CD4-positive, alpha-beta memory T cell (primary cell): ENCODE measurements at regions of chr15 and their contacts with region 1.

Region 1: GRCh38 chr15:40440743-40441564 is at the start of gene BAHD1:
- DNase-seq: peak; percentile 89 to 93 (median 90)
- H3K4me3 ChIP-seq: peak within 1 kb of the TSS; percentile 62 to 65
- H3K4me3 Mint-ChIP-seq: peak within 1 kb of the TSS; percentile 91 to 96 (median 93)
- H3K27ac ChIP-seq: peak within 1 kb of the TSS; percentile 49
- H3K27ac Mint-ChIP-seq: peak within 1 kb of the TSS; percentile 87 to 94 (median 92)
- H3K4me1 ChIP-seq: peaks cover 67% of the 10 kb centered on the region
- H3K4me1 Mint-ChIP-seq: peaks cover 49 to 83% (median 60%) of the 10 kb centered on the region in 4 donors
- H3K27me3 ChIP-seq: peaks cover 12% of the 10 kb centered on the region
- H3K27me3 Mint-ChIP-seq: peaks cover 13% of the 10 kb centered on the region in 2 donors
- total RNA-seq, gene BAHD1: 47.0 to 49.2 TPM

Region 2: DNA sequence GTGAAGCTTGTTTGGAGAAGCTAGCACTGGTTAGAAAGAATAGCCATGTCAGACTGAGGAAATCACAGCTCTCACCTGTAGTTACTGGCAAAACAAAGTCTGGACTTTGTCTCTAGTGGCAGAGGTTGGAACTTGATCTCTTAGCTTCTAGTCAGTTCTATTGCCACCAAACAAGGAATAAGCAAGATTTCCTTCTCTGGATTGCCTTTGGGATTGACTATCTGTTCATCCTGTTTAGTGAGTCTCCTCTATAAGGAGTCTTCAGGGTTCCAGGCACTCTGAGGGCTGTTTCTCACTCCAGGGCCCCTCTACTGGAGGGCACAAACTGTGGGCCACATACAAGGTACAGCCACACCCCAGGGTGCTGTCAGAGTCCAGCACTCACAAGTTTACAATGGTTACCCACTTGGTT is 1286.7 kb before region 1 on chr15:
- CTCF ChIA-PET with region 1: no interaction called
- POLR2A ChIA-PET with region 1: no interaction called
- intact Hi-C with region 1: no loop called
- DNase-seq: no peak
- H3K4me3 ChIP-seq: no peak overlapping the region
- H3K4me3 Mint-ChIP-seq: no peak overlapping the region
- H3K27ac ChIP-seq: no peak overlapping the region
- H3K27ac Mint-ChIP-seq: no peak overlapping the region
- H3K4me1 ChIP-seq: no peaks in the 10 kb centered on the region
- H3K4me1 Mint-ChIP-seq: no peaks in the 10 kb centered on the region
- H3K27me3 ChIP-seq: no peaks in the 10 kb centered on the region
- H3K27me3 Mint-ChIP-seq: peaks cover 4 to 7% of the 10 kb centered on the region in 2 donors

Region 3: GRCh38 chr15:40405501-40406381 is 35.2 kb before region 1 on chr15 and contains the start of gene IVD:
- CTCF ChIA-PET with region 1: no interaction called
- POLR2A ChIA-PET with region 1: interaction called, 8 read pairs
- intact Hi-C with region 1: loop called (anchors 2 kb)
- DNase-seq: peak; percentile 78 to 82 (median 80)
- H3K4me3 ChIP-seq: peak within 1 kb of the TSS; percentile 42 to 63
- H3K4me3 Mint-ChIP-seq: peak within 1 kb of the TSS; percentile 82 to 98 (median 90)
- H3K27ac ChIP-seq: peak within 1 kb of the TSS; percentile 61
- H3K27ac Mint-ChIP-seq: peak within 1 kb of the TSS; percentile 62 to 92 (median 86)
- H3K4me1 ChIP-seq: peaks cover 25% of the 10 kb centered on the region
- H3K4me1 Mint-ChIP-seq: peaks cover 24 to 35% (median 30%) of the 10 kb centered on the region in 4 donors
- H3K27me3 ChIP-seq: no peaks in the 10 kb centered on the region
- H3K27me3 Mint-ChIP-seq: no peaks in the 10 kb centered on the region
- total RNA-seq, gene IVD: 56.4 to 62.2 TPM

Region 4: DNA sequence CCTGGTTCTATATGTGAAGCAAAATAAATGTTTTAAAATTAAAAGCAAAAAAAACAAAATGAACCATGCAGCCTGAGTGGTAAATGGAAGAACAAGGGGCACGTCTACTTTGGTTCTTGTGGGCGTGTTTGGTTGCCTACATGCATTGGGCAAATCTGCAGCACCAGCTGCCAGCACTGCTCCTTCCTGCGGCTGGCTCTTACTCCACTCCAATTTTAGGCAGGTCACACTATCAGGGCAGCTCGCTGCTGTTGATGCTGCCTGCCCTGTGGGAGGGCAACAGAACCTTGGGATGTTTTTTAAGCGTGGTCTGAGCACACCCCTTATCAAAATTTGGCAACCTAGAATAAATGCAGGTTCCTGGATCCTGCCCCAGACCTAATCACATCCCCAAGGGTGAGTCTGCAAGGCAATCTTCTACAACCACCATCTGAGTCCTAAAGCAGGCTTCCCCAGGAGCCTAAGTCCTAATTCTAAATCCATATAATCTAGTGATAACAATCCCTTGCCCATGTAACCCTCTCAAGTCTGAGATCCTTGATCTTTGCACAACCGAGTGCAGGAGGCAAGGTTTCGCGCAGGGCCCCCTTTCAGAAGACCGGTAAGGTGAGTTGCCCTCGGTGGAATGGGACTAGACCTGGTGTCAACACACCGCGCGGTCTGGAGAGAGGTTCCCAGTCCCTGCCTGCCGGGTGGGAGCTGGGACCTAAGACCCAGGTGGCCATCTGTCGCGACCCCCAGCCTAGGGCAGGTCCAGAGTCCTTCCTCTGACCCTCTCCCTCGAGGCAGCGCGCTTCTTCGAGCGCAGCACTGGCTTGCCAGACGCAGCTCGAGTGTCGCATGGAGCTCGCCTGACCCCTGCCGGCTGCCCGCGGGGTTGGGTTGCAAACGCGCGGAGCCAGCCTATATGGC is 19.5 kb before region 1 on chr15:
- CTCF ChIA-PET with region 1: interaction called, 10 read pairs
- POLR2A ChIA-PET with region 1: no interaction called
- intact Hi-C with region 1: no loop called
- DNase-seq: peak; percentile 73 to 77 (median 74)
- H3K4me3 ChIP-seq: no peak overlapping the region
- H3K4me3 Mint-ChIP-seq: no peak overlapping the region
- H3K27ac ChIP-seq: no peak overlapping the region
- H3K27ac Mint-ChIP-seq: peak overlapping the region in 1 of 7 donors; percentile 40
- H3K4me1 ChIP-seq: peaks cover 8% of the 10 kb centered on the region
- H3K4me1 Mint-ChIP-seq: peaks cover 0 to 5% (median 0%) of the 10 kb centered on the region in 4 donors
- H3K27me3 ChIP-seq: no peaks in the 10 kb centered on the region
- H3K27me3 Mint-ChIP-seq: no peaks in the 10 kb centered on the region

Region 5: GRCh38 chr15:40454904-40455391 is 14.0 kb after region 1 on chr15:
- CTCF ChIA-PET with region 1: interaction called, 10 read pairs
- POLR2A ChIA-PET with region 1: interaction called, 94 read pairs
- intact Hi-C with region 1: no loop called
- DNase-seq: no peak
- H3K4me3 ChIP-seq: no peak overlapping the region
- H3K4me3 Mint-ChIP-seq: peak overlapping the region in 7 of 8 donors; percentile 21 to 89 (median 67)
- H3K27ac ChIP-seq: peak overlapping the region; percentile 50
- H3K27ac Mint-ChIP-seq: peak overlapping the region; percentile 43 to 88 (median 80)
- H3K4me1 ChIP-seq: peaks cover 76% of the 10 kb centered on the region
- H3K4me1 Mint-ChIP-seq: peaks cover 55 to 78% (median 64%) of the 10 kb centered on the region in 4 donors
- H3K27me3 ChIP-seq: no peaks in the 10 kb centered on the region
- H3K27me3 Mint-ChIP-seq: no peaks in the 10 kb centered on the region

Region 6: GRCh38 chr15:40470423-40471104 is 29.6 kb after region 1 on chr15 and contains the start of gene CHST14:
- CTCF ChIA-PET with region 1: interaction called, 5 read pairs
- POLR2A ChIA-PET with region 1: interaction called, 6 read pairs
- intact Hi-C with region 1: loop called (anchors 5 kb)
- DNase-seq: peak; percentile 42 to 70 (median 58)
- H3K4me3 ChIP-seq: peak within 1 kb of the TSS; percentile 58 to 74
- H3K4me3 Mint-ChIP-seq: peak within 1 kb of the TSS; percentile 87 to 93 (median 90)
- H3K27ac ChIP-seq: peak within 1 kb of the TSS; percentile 70
- H3K27ac Mint-ChIP-seq: peak within 1 kb of the TSS; percentile 87 to 94 (median 90)
- H3K4me1 ChIP-seq: peaks cover 23% of the 10 kb centered on the region
- H3K4me1 Mint-ChIP-seq: peaks cover 12 to 30% (median 22%) of the 10 kb centered on the region in 4 donors
- H3K27me3 ChIP-seq: no peaks in the 10 kb centered on the region
- H3K27me3 Mint-ChIP-seq: no peaks in the 10 kb centered on the region
- total RNA-seq, gene CHST14: 9.1 to 10.5 TPM

Region 7: DNA sequence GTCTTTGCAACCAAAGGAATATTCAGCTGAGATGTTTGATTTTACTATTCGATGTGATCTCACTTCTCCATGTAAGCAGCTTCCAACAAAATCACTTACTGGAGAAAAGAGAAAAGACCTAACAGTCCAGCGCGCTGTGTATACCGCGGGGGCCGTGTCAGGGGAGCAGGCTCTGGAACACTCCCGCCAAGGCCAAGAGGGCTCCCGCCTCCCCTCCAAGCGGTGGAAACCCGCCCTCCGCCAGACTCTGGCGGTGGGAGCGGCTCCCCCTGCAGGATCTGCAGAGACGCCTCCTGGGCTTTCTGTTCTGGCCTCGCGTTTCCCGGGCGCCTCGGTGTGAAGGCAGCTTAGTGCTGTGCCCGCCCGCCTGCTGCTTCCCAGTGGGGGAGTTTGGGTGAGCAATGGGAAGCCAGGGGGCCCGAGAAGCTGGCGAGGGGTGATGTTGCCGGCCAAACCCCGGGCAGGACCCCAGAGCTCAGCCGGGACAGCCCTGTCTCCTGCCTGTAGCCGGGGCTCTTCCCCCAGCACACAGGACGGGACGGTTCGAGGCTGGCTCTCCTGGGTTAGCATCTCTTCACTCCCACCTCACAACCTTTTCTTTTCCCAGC is 66.1 kb after region 1 on chr15:
- CTCF ChIA-PET with region 1: interaction called, 29 read pairs
- POLR2A ChIA-PET with region 1: interaction called, 5 read pairs
- intact Hi-C with region 1: loop called (anchors 1 kb)
- DNase-seq: peak; percentile 44 to 64 (median 47)
- H3K4me3 ChIP-seq: peak overlapping the region in 1 of 2 donors; percentile 22
- H3K4me3 Mint-ChIP-seq: peak overlapping the region in 6 of 8 donors; percentile 12 to 74 (median 54)
- H3K27ac ChIP-seq: no peak overlapping the region
- H3K27ac Mint-ChIP-seq: no peak overlapping the region
- H3K4me1 ChIP-seq: peaks cover 24% of the 10 kb centered on the region
- H3K4me1 Mint-ChIP-seq: peaks cover 9 to 20% (median 14%) of the 10 kb centered on the region in 4 donors
- H3K27me3 ChIP-seq: peaks cover 31% of the 10 kb centered on the region
- H3K27me3 Mint-ChIP-seq: peaks cover 30 to 48% of the 10 kb centered on the region in 2 donors

Region 8: GRCh38 chr15:40564591-40565332 is 123.8 kb after region 1 on chr15 and contains the start of gene CCDC32:
- CTCF ChIA-PET with region 1: no interaction called
- POLR2A ChIA-PET with region 1: interaction called, 4 read pairs
- intact Hi-C with region 1: loop called (anchors 2 kb)
- DNase-seq: peak; percentile 93 to 98 (median 96)
- H3K4me3 ChIP-seq: peak within 1 kb of the TSS; percentile 97 to 98
- H3K4me3 Mint-ChIP-seq: peak within 1 kb of the TSS; percentile 95 to 98 (median 97)
- H3K27ac ChIP-seq: peak within 1 kb of the TSS; percentile 92
- H3K27ac Mint-ChIP-seq: peak within 1 kb of the TSS; percentile 89 to 99 (median 98)
- H3K4me1 ChIP-seq: peaks cover 34% of the 10 kb centered on the region
- H3K4me1 Mint-ChIP-seq: peaks cover 26 to 65% (median 42%) of the 10 kb centered on the region in 4 donors
- H3K27me3 ChIP-seq: no peaks in the 10 kb centered on the region
- H3K27me3 Mint-ChIP-seq: no peaks in the 10 kb centered on the region
- total RNA-seq, gene CCDC32: 31.7 to 32.4 TPM

Region 9: GRCh38 chr15:40660686-40661085 is 219.7 kb after region 1 on chr15:
- CTCF ChIA-PET with region 1: no interaction called
- POLR2A ChIA-PET with region 1: no interaction called
- intact Hi-C with region 1: no loop called
- DNase-seq: no peak
- H3K4me3 ChIP-seq: no peak overlapping the region
- H3K4me3 Mint-ChIP-seq: no peak overlapping the region
- H3K27ac ChIP-seq: no peak overlapping the region
- H3K27ac Mint-ChIP-seq: no peak overlapping the region
- H3K4me1 ChIP-seq: no peaks in the 10 kb centered on the region
- H3K4me1 Mint-ChIP-seq: no peaks in the 10 kb centered on the region
- H3K27me3 ChIP-seq: no peaks in the 10 kb centered on the region
- H3K27me3 Mint-ChIP-seq: no peaks in the 10 kb centered on the region